ENCODE measurements at regions of chr2 and their contacts with region 1.

Region 1: GRCh38 chr2:130824492-130825061 is 12.1 kb upstream of the ARHGEF4 start:
- DNase-seq: peak; percentile 71
- H3K4me3 Mint-ChIP-seq: peak overlapping the region; percentile 43
- H3K27ac Mint-ChIP-seq: peak overlapping the region; percentile 87
- H3K4me1 Mint-ChIP-seq: peaks cover 29% of the 10 kb centered on the region
- H3K27me3 Mint-ChIP-seq: peaks cover 7% of the 10 kb centered on the region

Region 2: DNA sequence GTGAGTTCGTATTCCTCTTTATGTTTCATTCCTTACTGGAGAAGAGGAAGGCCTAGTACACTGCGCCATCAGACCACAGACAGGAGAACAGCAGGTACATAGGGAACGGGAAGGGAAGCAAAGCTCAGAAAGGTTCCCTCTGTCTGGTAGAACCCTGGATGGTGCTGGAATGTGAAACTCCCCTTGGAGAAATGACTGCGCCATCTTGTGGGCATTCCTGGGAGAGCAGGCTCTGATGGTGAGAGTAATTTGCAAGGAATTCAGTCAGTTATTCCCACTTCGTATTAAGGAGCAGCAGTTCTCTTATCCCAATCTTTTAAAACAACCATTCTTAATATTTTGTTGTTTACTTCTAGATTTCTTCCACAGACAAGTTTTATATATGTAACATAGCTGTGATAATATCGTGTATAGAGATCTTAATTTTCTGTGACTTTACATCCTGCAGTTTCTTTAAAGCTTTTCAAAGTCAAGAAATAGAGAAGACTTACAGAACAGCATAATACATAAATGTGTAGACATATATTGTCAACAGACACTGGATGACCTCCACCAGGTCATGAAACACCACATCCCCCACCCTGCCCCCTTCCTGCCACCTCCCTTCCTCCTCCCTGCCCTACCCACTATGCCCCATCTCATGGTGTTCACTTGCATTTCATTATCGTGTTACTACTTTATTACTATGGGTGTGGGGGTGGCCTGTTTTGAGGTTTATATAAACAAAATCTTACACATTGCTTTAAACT is 96.0 kb after region 1 on chr2:
- intact Hi-C with region 1: loop called (anchors 1 kb)
- DNase-seq: no peak
- H3K4me3 Mint-ChIP-seq: no peak overlapping the region
- H3K27ac Mint-ChIP-seq: no peak overlapping the region
- H3K4me1 Mint-ChIP-seq: no peaks in the 10 kb centered on the region
- H3K27me3 Mint-ChIP-seq: no peaks in the 10 kb centered on the region